ENCODE measurements at regions of chr3 and their contacts with region 1.

Region 1: DNA sequence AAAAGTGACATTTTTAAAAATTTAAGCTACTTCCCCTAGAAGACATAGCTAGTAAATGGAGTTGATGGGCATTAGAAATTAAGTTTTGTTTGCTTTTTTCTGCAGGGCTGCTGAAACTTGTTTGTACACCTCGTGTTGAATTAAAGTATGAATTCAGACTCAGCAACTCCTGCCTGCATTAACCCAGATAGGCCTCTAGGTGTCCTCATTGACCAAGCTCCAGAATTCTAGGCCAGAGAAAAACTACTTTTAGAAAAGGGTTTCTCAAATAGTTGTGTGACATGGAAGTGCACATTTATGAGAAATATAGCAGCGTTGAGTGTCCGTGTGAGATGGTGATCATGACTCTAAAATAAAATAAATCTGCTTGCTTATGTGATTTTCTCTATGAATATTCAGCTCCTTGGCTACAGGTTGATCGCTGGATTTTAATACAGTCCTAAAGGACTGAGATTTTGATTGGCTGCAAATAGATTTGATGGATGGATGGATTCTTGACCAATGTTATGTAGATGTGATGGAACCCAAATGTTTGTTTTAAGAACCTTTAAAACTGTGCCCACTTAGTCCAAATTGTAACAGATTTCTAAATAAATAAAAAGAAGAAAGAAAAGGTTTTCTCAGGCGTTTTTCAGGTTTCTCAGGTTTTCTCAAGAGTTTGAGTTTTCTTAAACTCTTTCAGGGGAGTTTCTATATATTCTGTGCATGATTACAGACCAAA is 39.4 kb upstream of the LMOD3 start:
- DNase-seq: peak; percentile 41 to 42
- ATAC-seq: peak in 1 of 2 experiments; percentile 60; a peak in 4 of 6 replicates
- H3K4me3 ChIP-seq: no peak overlapping the region
- H3K27ac ChIP-seq: no peak overlapping the region
- H3K4me1 ChIP-seq: no peaks in the 10 kb centered on the region
- CTCF ChIP-seq: peak; percentile 88
- EP300 ChIP-seq: no peak
- POLR2A ChIP-seq: no peak
- RAD21 ChIP-seq: peak; percentile 94 to 96

Region 2: GRCh38 chr3:68996356-68996995 is 165.3 kb before region 1 on chr3:
- CTCF ChIA-PET with region 1: no interaction called
- POLR2A ChIA-PET with region 1: no interaction called
- DNase-seq: no peak
- ATAC-seq: no peak
- H3K4me3 ChIP-seq: no peak overlapping the region
- H3K27ac ChIP-seq: no peak overlapping the region
- H3K4me1 ChIP-seq: no peaks in the 10 kb centered on the region
- CTCF ChIP-seq: no peak
- EP300 ChIP-seq: no peak
- POLR2A ChIP-seq: no peak
- RAD21 ChIP-seq: no peak

Region 3: DNA sequence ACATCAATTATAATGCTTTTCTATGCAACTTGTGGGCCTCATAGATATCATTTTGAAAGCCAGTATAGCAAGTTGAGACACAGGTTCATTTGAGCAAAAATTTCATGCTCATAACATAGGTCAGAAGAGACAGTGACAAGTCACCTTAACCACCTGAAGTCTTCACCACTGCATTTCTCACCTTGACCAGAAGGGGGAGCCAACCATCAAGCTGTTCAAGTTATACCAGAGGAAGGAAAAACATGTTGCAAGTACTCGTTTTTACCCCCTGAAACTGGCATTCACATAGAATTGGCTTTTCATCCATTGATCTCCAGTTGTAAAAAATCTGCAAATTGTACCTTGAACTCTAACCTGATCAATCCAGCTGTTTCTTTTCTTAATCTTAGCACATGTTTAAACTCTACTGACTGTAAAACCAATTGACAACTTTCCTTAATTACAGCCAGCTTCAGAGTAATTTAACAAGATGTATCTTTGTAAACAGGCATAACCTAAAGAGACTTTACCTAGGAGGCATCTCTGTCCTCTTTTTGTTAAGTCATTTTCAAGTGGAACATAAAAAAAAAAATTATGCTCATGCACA is 40.8 kb before region 1 on chr3:
- CTCF ChIA-PET with region 1: interaction called, 23 read pairs
- POLR2A ChIA-PET with region 1: no interaction called
- DNase-seq: peak; percentile 21 to 85
- ATAC-seq: peak; percentile 64 to 84; a peak in 5 of 6 replicates
- H3K4me3 ChIP-seq: no peak overlapping the region
- H3K27ac ChIP-seq: no peak overlapping the region
- H3K4me1 ChIP-seq: no peaks in the 10 kb centered on the region
- CTCF ChIP-seq: peak; percentile 79
- EP300 ChIP-seq: no peak
- POLR2A ChIP-seq: no peak
- RAD21 ChIP-seq: peak; percentile 72 to 79

Region 4: DNA sequence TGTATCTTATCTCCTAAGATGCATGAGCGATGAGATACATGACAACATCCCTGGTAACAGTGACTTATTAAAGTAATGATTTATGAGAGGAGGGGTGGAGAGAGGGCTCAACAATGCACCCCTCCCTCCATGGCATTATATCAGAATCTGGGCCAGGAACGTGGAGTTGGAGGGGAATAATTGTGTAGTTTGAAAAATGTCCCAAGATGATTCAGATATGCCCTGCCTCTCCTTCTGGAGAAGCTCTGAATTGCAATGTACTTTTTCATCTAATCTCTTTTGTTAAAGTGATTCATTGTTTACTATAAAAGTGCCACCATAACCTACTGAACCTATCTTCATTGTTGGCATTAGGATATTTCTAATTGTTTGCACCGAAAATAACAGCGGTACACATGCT is 137.6 kb after region 1 on chr3:
- CTCF ChIA-PET with region 1: interaction called, 283 read pairs
- POLR2A ChIA-PET with region 1: no interaction called
- DNase-seq: peak in 1 of 2 experiments; percentile 4
- ATAC-seq: peak in 1 of 2 experiments; percentile 45; a peak in 2 of 6 replicates
- H3K4me3 ChIP-seq: no peak overlapping the region
- H3K27ac ChIP-seq: no peak overlapping the region
- H3K4me1 ChIP-seq: peaks cover 8% of the 10 kb centered on the region; the same call in 1 of the 3 replicates
- CTCF ChIP-seq: no peak
- EP300 ChIP-seq: no peak
- POLR2A ChIP-seq: no peak
- RAD21 ChIP-seq: no peak

Region 5: DNA sequence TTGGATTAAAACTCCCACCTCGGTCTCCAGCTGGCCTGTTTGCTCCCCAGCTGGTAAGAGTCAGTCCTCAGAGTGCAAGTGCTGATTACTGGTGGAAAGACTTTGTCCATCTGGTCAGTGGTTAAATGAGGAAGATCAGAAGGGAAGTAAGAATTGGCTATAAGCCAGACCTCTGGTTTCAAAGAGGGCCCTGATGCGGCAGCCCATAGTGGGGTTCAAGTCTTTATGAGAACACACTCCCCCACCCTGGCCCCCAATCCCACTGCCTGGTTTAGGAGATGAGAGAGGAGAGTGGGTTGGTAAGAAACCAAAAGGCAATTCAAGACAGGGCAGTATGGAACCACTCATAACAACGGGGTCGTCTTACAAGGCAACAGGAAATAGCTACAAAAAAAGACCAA is 159.1 kb after region 1 on chr3:
- CTCF ChIA-PET with region 1: interaction called, 11 read pairs
- POLR2A ChIA-PET with region 1: no interaction called
- DNase-seq: no peak
- ATAC-seq: no peak
- H3K4me3 ChIP-seq: no peak overlapping the region
- H3K27ac ChIP-seq: no peak overlapping the region
- H3K4me1 ChIP-seq: no peaks in the 10 kb centered on the region
- CTCF ChIP-seq: no peak
- EP300 ChIP-seq: no peak
- POLR2A ChIP-seq: no peak
- RAD21 ChIP-seq: no peak

Region 6: DNA sequence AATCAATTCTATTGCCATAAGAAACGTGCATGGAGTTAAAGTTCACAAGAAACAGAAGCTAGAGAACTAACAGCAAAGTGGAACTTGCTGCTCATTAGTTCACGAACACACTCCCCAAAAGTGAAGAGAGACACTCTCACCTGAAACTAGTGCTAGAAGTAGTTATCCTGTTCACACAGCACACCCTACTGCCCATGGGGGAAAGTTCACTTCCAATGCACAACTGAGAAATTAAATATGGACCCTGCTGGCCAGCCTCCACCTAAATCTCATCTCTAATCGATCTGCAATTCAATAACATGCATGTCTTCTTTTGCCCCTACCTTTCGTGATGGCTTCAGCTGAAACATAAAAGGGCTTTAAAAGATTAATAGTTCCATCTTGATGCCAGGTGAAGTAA is 263.5 kb after region 1 on chr3:
- CTCF ChIA-PET with region 1: interaction called, 21 read pairs
- POLR2A ChIA-PET with region 1: no interaction called
- DNase-seq: peak; percentile 7 to 32
- ATAC-seq: peak; percentile 86 to 89
- H3K4me3 ChIP-seq: no peak overlapping the region
- H3K27ac ChIP-seq: no peak overlapping the region
- H3K4me1 ChIP-seq: no peaks in the 10 kb centered on the region
- CTCF ChIP-seq: peak; percentile 48
- EP300 ChIP-seq: no peak
- POLR2A ChIP-seq: no peak
- RAD21 ChIP-seq: peak; percentile 58 to 59

Measured in A549 (cell line).